Sigmoid colon (tissue), 7 donors: ENCODE measurements at regions of chr11 and their contacts with region 1.

Region 1: GRCh38 chr11:117072517-117073461 is 25.4 kb downstream of the SIK3 start:
- DNase-seq: no peak
- H3K4me3 ChIP-seq: no peak overlapping the region
- H3K27ac ChIP-seq: peak overlapping the region; percentile 41 to 67 (median 58)
- H3K4me1 ChIP-seq: peaks cover 0 to 77% (median 68%) of the 10 kb centered on the region in 4 donors
- H3K27me3 ChIP-seq: no peaks in the 10 kb centered on the region
- CTCF ChIP-seq: no peak
- EP300 ChIP-seq: peak in 1 of 4 donors; percentile 9
- POLR2A ChIP-seq: no peak

Region 2: DNA sequence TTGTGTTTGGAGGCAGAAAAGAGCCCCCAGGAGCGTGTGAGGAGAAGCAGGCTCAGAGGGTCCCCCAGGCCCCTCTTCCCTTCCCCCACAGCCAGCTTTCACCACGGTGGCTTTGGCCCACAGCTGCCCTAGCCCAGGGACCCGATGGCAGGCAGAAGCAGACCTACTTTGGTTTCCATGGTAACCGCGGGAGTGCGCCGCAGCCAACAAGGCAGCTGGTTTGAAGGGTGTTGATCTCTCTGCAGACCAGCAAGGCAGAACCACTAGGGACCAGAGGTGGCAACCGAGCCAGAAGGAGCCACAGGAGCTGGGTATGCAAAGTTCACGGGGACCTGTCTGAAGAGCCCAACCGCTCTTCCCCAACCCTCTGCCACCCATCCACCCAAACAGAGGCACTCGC is 369.4 kb before region 1 on chr11:
- intact Hi-C with region 1: no loop called
- DNase-seq: peak; percentile 61
- H3K4me3 ChIP-seq: no peak overlapping the region
- H3K27ac ChIP-seq: no peak overlapping the region
- H3K4me1 ChIP-seq: no peaks in the 10 kb centered on the region
- H3K27me3 ChIP-seq: peaks cover 0 to 13% (median 0%) of the 10 kb centered on the region in 3 donors
- CTCF ChIP-seq: no peak
- EP300 ChIP-seq: no peak
- POLR2A ChIP-seq: no peak

Region 3: GRCh38 chr11:116986521-116987105 is 86.2 kb before region 1 on chr11:
- intact Hi-C with region 1: loop called (anchors 5 kb)
- DNase-seq: no peak
- H3K4me3 ChIP-seq: no peak overlapping the region
- H3K27ac ChIP-seq: peak overlapping the region; percentile 41 to 84 (median 72)
- H3K4me1 ChIP-seq: peaks cover 0 to 81% (median 68%) of the 10 kb centered on the region in 4 donors
- H3K27me3 ChIP-seq: no peaks in the 10 kb centered on the region
- CTCF ChIP-seq: no peak
- EP300 ChIP-seq: no peak
- POLR2A ChIP-seq: no peak

Region 4: GRCh38 chr11:117098269-117099232 is 25.8 kb after region 1 on chr11 and contains the start of gene SIK3:
- intact Hi-C with region 1: no loop called
- DNase-seq: peak; percentile 97
- H3K4me3 ChIP-seq: peak within 1 kb of the TSS; percentile 77 to 98 (median 91)
- H3K27ac ChIP-seq: peak within 1 kb of the TSS; percentile 97 to 100 (median 98)
- H3K4me1 ChIP-seq: peaks cover 0 to 49% (median 44%) of the 10 kb centered on the region in 4 donors
- H3K27me3 ChIP-seq: no peaks in the 10 kb centered on the region
- CTCF ChIP-seq: peak in 2 of 4 experiments; percentile 20 to 32
- EP300 ChIP-seq: peak in 2 of 4 donors; percentile 76 to 82
- POLR2A ChIP-seq: peak; percentile 51 to 76
- total RNA-seq, gene SIK3: 35.3 to 53.2 (median 40.9) TPM

Region 5: DNA sequence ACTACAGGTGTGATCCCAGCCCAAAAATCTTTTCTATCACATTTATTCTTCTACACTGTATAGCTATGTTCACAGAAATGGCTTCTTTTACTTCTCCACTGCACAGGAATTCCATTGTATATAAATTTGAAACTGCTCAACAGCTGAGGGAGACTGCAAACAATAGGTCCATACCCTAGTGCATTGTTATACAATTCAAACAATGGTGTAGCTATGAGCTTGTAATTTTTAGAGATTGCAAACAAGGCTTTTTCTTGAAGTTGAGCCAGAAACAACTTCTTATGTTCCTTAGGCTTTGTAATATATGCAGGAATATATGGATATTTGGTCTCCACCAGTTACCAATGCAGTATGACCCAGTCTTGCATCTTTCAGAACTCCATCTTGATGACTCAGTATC is 44.9 kb after region 1 on chr11:
- intact Hi-C with region 1: no loop called
- DNase-seq: no peak
- H3K4me3 ChIP-seq: no peak overlapping the region
- H3K27ac ChIP-seq: no peak overlapping the region
- H3K4me1 ChIP-seq: no peaks in the 10 kb centered on the region
- H3K27me3 ChIP-seq: no peaks in the 10 kb centered on the region
- CTCF ChIP-seq: no peak
- EP300 ChIP-seq: no peak
- POLR2A ChIP-seq: no peak